ENCODE measurements at regions of chr1 and their contacts with region 1.

Region 1: DNA sequence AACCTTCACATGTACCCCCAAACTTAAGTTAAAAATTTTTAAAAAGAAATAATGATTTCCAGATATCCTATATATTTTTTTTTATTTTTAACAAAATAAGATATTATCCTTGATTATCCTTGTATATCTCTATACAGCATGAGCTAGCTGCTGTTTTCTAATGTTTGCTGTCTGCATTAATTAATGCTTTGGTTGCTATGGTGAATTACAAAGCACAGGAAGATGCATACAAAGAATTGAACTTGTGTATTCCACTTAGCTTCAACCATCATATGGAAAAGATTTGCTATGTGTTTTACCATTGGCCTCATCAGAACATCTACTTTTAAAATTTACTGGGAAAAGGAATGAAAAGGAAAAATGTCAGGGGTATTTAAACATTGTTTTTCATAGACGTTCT is 35.4 kb downstream of the VPS45 start:
- DNase-seq: no peak
- ATAC-seq: no peak
- H3K4me3 Mint-ChIP-seq: no peak overlapping the region
- H3K27ac Mint-ChIP-seq: no peak overlapping the region
- H3K4me1 Mint-ChIP-seq: peaks cover 58% of the 10 kb centered on the region
- H3K27me3 Mint-ChIP-seq: no peaks in the 10 kb centered on the region

Region 2: GRCh38 chr1:150149271-150150132 is 46.5 kb after region 1 on chr1 and contains the start of gene PLEKHO1:
- CTCF ChIA-PET with region 1: interaction called, 3 read pairs
- POLR2A ChIA-PET with region 1: interaction called, 11 read pairs
- DNase-seq: peak; percentile 86
- ATAC-seq: peak; percentile 73
- H3K4me3 Mint-ChIP-seq: peak within 1 kb of the TSS; percentile 93
- H3K27ac Mint-ChIP-seq: peak within 1 kb of the TSS; percentile 94
- H3K4me1 Mint-ChIP-seq: peaks cover 70% of the 10 kb centered on the region
- H3K27me3 Mint-ChIP-seq: no peaks in the 10 kb centered on the region
- total RNA-seq, gene PLEKHO1: 138 to 154 TPM